Naive thymus-derived CD4-positive, alpha-beta T cell (primary cell): ENCODE measurements at regions of chr15 and their contacts with region 1.

Region 1: DNA sequence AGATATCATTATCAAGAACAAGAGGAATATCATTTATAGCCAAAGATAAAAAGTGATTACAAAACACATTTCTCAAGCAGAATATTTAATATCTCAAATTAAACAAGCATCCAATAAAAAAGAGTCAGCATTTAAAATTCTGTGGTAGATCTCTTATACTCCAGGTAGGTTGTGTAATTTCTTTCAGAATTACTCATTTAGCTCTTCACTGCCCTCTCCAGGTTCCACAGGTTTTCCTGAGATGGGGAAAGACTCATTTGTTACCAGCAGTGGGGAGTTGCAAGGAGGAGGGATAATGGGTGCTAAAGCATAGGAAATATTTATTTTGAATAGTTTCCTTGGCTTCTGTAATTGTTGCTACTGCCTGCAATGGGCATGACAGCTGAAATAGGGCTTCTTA is 83.1 kb upstream of the RASGRP1 start:
- DNase-seq: no peak
- ATAC-seq: no peak
- H3K4me3 ChIP-seq: no peak overlapping the region
- H3K4me3 Mint-ChIP-seq: peak overlapping the region in 6 of 10 donors; percentile 2 to 78 (median 68)
- H3K27ac ChIP-seq: no peak overlapping the region
- H3K27ac Mint-ChIP-seq: peak overlapping the region in 8 of 9 donors; percentile 85 to 99 (median 96)
- H3K4me1 ChIP-seq: peaks cover 47 to 72% of the 10 kb centered on the region in 2 donors
- H3K4me1 Mint-ChIP-seq: peaks cover 48 to 93% (median 85%) of the 10 kb centered on the region in 7 donors
- H3K27me3 ChIP-seq: no peaks in the 10 kb centered on the region
- H3K27me3 Mint-ChIP-seq: no peaks in the 10 kb centered on the region

Region 2: GRCh38 chr15:38474155-38474757 is 173.4 kb before region 1 on chr15:
- CTCF ChIA-PET with region 1: interaction called, 4 read pairs
- POLR2A ChIA-PET with region 1: interaction called, 5 read pairs
- intact Hi-C with region 1: loop called in 1 of 2 experiments (anchors 2 kb)
- DNase-seq: peak in 7 of 9 donors; percentile 53 to 75 (median 62)
- ATAC-seq: peak; percentile 100
- H3K4me3 ChIP-seq: no peak overlapping the region
- H3K4me3 Mint-ChIP-seq: peak overlapping the region in 2 of 10 donors; percentile 4 to 10
- H3K27ac ChIP-seq: no peak overlapping the region
- H3K27ac Mint-ChIP-seq: peak overlapping the region; percentile 10 to 88 (median 81)
- H3K4me1 ChIP-seq: peaks cover 0 to 5% of the 10 kb centered on the region in 2 donors
- H3K4me1 Mint-ChIP-seq: peaks cover 10 to 23% (median 13%) of the 10 kb centered on the region in 7 donors
- H3K27me3 ChIP-seq: no peaks in the 10 kb centered on the region
- H3K27me3 Mint-ChIP-seq: no peaks in the 10 kb centered on the region

Region 3: GRCh38 chr15:38610748-38611147 is 36.9 kb before region 1 on chr15:
- CTCF ChIA-PET with region 1: interaction called, 11 read pairs
- POLR2A ChIA-PET with region 1: interaction called, 7 read pairs
- intact Hi-C with region 1: loop called (anchors 1 to 2 kb)
- DNase-seq: peak in 8 of 9 donors; percentile 31 to 76 (median 54)
- ATAC-seq: peak; percentile 80
- H3K4me3 ChIP-seq: peak overlapping the region; percentile 2
- H3K4me3 Mint-ChIP-seq: peak overlapping the region; percentile 10 to 79 (median 40)
- H3K27ac ChIP-seq: peak overlapping the region; percentile 57
- H3K27ac Mint-ChIP-seq: peak overlapping the region; percentile 78 to 96 (median 88)
- H3K4me1 ChIP-seq: peaks cover 25 to 43% of the 10 kb centered on the region in 2 donors
- H3K4me1 Mint-ChIP-seq: peaks cover 28 to 75% (median 54%) of the 10 kb centered on the region in 7 donors
- H3K27me3 ChIP-seq: no peaks in the 10 kb centered on the region
- H3K27me3 Mint-ChIP-seq: no peaks in the 10 kb centered on the region

Region 4: DNA sequence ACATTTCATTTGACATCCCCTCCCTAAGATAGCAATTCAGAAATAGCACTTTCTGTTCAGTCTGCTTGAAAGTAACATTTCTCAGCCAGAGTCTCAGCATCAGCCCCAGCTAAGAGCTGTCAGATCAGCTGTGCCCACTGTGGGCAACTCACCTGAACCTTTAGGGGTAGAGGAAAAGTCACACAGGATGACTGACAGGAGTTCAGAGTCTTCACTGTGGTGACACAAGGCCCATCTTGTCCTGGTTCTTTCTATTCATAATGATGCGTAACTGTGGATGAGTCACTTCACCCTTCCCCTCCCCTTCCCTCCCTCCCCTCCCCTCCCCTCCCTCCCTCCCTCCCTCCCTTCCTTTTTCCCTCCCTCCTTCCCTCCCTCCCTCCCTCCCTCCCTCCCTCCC is 13.1 kb after region 1 on chr15:
- CTCF ChIA-PET with region 1: interaction called, 44 read pairs
- POLR2A ChIA-PET with region 1: interaction called, 548 read pairs
- intact Hi-C with region 1: no loop called
- DNase-seq: peak in 2 of 9 donors; percentile 27 to 29
- ATAC-seq: peak; percentile 65
- H3K4me3 ChIP-seq: no peak overlapping the region
- H3K4me3 Mint-ChIP-seq: peak overlapping the region; percentile 5 to 84 (median 70)
- H3K27ac ChIP-seq: peak overlapping the region; percentile 56
- H3K27ac Mint-ChIP-seq: peak overlapping the region; percentile 56 to 94 (median 88)
- H3K4me1 ChIP-seq: peaks cover 17 to 53% of the 10 kb centered on the region in 2 donors
- H3K4me1 Mint-ChIP-seq: peaks cover 50 to 94% (median 83%) of the 10 kb centered on the region in 7 donors
- H3K27me3 ChIP-seq: no peaks in the 10 kb centered on the region
- H3K27me3 Mint-ChIP-seq: no peaks in the 10 kb centered on the region

Region 5: GRCh38 chr15:38678246-38678645 is 30.6 kb after region 1 on chr15:
- CTCF ChIA-PET with region 1: interaction called, 241 read pairs
- POLR2A ChIA-PET with region 1: interaction called, 548 read pairs
- intact Hi-C with region 1: loop called in 1 of 2 experiments (anchors 1 kb)
- DNase-seq: no peak
- ATAC-seq: no peak
- H3K4me3 ChIP-seq: no peak overlapping the region
- H3K4me3 Mint-ChIP-seq: no peak overlapping the region
- H3K27ac ChIP-seq: no peak overlapping the region
- H3K27ac Mint-ChIP-seq: peak overlapping the region in 4 of 9 donors; percentile 27 to 68 (median 46)
- H3K4me1 ChIP-seq: peaks cover 22 to 24% of the 10 kb centered on the region in 2 donors
- H3K4me1 Mint-ChIP-seq: peaks cover 25 to 74% (median 65%) of the 10 kb centered on the region in 7 donors
- H3K27me3 ChIP-seq: no peaks in the 10 kb centered on the region
- H3K27me3 Mint-ChIP-seq: no peaks in the 10 kb centered on the region

Region 6: GRCh38 chr15:38828031-38828532 is 180.4 kb after region 1 on chr15:
- CTCF ChIA-PET with region 1: no interaction called
- POLR2A ChIA-PET with region 1: no interaction called
- intact Hi-C with region 1: no loop called
- DNase-seq: no peak
- ATAC-seq: no peak
- H3K4me3 ChIP-seq: no peak overlapping the region
- H3K4me3 Mint-ChIP-seq: no peak overlapping the region
- H3K27ac ChIP-seq: no peak overlapping the region
- H3K27ac Mint-ChIP-seq: no peak overlapping the region
- H3K4me1 ChIP-seq: no peaks in the 10 kb centered on the region
- H3K4me1 Mint-ChIP-seq: no peaks in the 10 kb centered on the region
- H3K27me3 ChIP-seq: no peaks in the 10 kb centered on the region
- H3K27me3 Mint-ChIP-seq: peaks cover 13 to 35% (median 26%) of the 10 kb centered on the region in 5 donors

Region 7: GRCh38 chr15:39009740-39010139 is 362.1 kb after region 1 on chr15:
- CTCF ChIA-PET with region 1: no interaction called
- POLR2A ChIA-PET with region 1: no interaction called
- intact Hi-C with region 1: no loop called
- DNase-seq: no peak
- ATAC-seq: no peak
- H3K4me3 ChIP-seq: no peak overlapping the region
- H3K4me3 Mint-ChIP-seq: no peak overlapping the region
- H3K27ac ChIP-seq: no peak overlapping the region
- H3K27ac Mint-ChIP-seq: no peak overlapping the region
- H3K4me1 ChIP-seq: no peaks in the 10 kb centered on the region
- H3K4me1 Mint-ChIP-seq: no peaks in the 10 kb centered on the region
- H3K27me3 ChIP-seq: no peaks in the 10 kb centered on the region
- H3K27me3 Mint-ChIP-seq: peaks cover 0 to 12% (median 8%) of the 10 kb centered on the region in 5 donors